Ovary (tissue), 10 donors: ENCODE measurements at regions of chr5 and their contacts with region 1.

Region 1: GRCh38 chr5:68215208-68215897 is at the start of gene PIK3R1:
- DNase-seq: peak; percentile 96 to 98 (median 96)
- H3K4me3 ChIP-seq: peak within 1 kb of the TSS; percentile 98
- H3K27ac ChIP-seq: peak within 1 kb of the TSS; percentile 96 to 97
- H3K4me1 ChIP-seq: peaks cover 4% of the 10 kb centered on the region
- H3K27me3 ChIP-seq: no peaks in the 10 kb centered on the region
- CTCF ChIP-seq: peak; percentile 40 to 75 (median 51)
- EP300 ChIP-seq: no peak
- POLR2A ChIP-seq: peak; percentile 95
- total RNA-seq, gene PIK3R1: 59.5 to 206 (median 82.0) TPM

Region 2: DNA sequence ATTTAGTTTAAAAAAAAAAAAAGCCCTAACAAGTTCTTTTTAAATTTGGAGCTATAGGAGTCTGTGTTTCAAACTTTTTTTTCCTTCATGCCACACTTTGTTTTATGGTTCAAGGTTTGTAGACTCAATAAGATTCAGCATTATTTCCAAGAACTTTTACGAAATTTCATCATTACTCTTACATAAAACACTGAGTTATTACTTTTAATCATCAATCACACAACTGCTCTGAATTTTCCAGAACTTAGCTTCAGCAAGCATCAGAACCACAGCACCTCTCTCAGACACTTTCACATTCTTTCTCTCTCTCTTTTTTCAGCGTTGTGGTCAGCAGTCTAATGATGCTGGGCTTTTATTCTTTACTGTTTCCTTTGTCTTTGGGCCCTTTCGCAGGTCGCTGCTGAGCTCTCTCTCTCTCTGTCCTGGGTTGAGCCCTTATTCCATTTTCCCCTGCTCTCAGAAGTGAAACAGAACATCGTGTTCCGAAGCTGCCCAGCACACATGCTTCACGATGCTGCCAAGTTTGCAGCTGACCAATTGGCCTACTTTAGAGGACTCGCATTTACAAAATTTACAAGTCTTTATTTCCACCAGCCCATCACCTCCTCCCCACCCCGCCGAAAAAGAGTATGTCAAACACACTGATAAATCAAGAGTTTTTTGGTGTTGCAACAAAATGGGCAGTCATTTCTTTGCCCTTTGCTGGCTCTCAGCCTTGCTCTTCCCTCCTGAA is 44.4 kb before region 1 on chr5:
- intact Hi-C with region 1: loop called in 2 of 4 experiments (anchors 5 kb)
- DNase-seq: peak; percentile 71 to 90 (median 85)
- H3K4me3 ChIP-seq: no peak overlapping the region
- H3K27ac ChIP-seq: peak overlapping the region in 1 of 2 donors; percentile 57
- H3K4me1 ChIP-seq: peaks cover 8% of the 10 kb centered on the region
- H3K27me3 ChIP-seq: no peaks in the 10 kb centered on the region
- CTCF ChIP-seq: no peak
- EP300 ChIP-seq: peak; percentile 79
- POLR2A ChIP-seq: no peak

Region 3: DNA sequence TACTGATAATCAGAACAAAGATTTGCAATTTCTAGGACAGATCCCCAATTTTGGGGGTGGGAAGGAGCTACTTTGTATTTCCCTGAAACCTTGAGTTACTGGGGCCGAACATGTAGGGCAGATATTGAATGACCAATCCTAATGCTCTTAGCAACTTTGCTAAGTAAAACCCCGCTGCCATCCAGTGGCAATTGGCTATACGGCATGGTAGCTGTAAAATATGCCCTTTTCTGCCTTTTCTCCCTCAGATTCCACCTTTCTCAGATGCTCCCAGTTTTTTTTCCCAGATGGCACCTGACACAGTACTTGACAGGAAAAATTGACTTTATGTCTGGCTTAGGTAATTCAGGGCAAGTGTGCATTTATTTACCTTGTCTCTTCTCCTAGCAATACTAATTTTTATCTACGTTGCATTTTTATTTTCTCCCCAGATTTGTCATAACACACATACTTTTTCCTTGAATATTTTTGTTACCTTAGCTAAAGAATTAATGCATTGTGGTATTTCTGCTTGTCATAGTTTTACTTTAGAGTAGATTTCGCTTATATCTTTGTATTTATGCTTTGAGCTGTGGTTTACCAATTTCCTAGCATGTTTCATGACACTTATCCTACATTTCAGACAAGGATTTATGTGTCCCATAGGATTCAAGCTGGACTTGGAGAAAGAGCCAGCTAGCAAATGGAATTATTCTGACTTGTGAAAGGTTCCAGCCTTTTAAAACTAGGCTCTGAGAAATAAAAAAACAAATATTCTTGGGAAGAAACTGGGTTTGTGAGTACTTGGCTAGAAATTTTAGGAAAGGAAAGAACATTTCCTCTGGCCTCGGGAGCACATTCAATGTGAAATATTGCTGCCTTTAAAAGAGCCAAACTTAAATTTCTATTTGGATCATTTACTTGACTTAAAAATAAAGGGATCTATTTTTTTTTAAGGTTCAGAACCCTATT is 37.6 kb after region 1 on chr5:
- intact Hi-C with region 1: loop called in 1 of 4 experiments (anchors 5 kb)
- DNase-seq: peak; percentile 59 to 75 (median 62)
- H3K4me3 ChIP-seq: no peak overlapping the region
- H3K27ac ChIP-seq: peak overlapping the region in 1 of 2 donors; percentile 38
- H3K4me1 ChIP-seq: peaks cover 25% of the 10 kb centered on the region
- H3K27me3 ChIP-seq: no peaks in the 10 kb centered on the region
- CTCF ChIP-seq: peak; percentile 58 to 72 (median 62)
- EP300 ChIP-seq: no peak
- POLR2A ChIP-seq: no peak